Breast epithelium (tissue), 4 donors: ENCODE measurements at regions of chr18 and their contacts with region 1.

Region 1: DNA sequence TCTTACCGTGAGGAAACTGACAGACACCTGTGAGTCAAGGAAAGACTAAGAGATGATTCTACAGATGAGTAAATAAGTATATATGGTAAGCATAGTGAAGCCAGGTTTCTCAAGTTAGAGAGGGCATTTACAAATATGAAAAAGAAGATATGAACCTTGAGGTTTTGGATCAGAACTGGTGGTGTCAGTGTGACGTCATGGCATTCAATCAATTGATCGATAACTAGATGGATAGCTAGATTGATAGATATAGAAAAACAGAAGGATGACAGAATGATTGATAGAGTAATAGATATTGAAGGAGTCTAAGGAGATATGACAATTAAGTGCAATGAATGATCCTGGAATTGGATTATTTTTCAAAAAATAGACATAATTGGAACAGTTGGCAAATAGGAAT is 350.2 kb upstream of the MC4R start:
- DNase-seq: no peak
- H3K4me3 ChIP-seq: no peak overlapping the region
- H3K27ac ChIP-seq: no peak overlapping the region
- H3K4me1 ChIP-seq: no peaks in the 10 kb centered on the region
- H3K27me3 ChIP-seq: no peaks in the 10 kb centered on the region
- CTCF ChIP-seq: no peak
- POLR2A ChIP-seq: no peak

Region 2: DNA sequence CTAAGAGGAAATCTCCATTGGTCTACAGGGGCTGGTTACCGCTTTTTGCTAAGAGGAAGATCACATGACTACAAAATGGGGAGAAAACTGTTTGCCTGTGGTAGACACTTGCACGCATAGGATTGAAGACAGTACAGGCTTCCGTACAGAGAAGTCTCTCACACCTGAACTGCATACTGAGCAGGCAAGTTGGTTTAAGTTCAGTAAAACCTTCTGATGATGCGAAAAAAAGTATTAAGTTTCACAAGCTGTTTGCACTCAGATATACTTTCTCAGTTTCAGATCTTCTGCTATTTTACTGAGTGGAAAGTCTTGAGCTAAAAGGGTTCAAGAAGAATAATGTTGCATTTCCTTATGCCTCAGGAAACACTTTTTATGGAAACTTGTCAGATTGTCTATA is 58.0 kb before region 1 on chr18:
- intact Hi-C with region 1: loop called (anchors 2 kb)
- DNase-seq: no peak
- H3K4me3 ChIP-seq: no peak overlapping the region
- H3K27ac ChIP-seq: no peak overlapping the region
- H3K4me1 ChIP-seq: no peaks in the 10 kb centered on the region
- H3K27me3 ChIP-seq: no peaks in the 10 kb centered on the region
- CTCF ChIP-seq: no peak
- POLR2A ChIP-seq: no peak

Region 3: DNA sequence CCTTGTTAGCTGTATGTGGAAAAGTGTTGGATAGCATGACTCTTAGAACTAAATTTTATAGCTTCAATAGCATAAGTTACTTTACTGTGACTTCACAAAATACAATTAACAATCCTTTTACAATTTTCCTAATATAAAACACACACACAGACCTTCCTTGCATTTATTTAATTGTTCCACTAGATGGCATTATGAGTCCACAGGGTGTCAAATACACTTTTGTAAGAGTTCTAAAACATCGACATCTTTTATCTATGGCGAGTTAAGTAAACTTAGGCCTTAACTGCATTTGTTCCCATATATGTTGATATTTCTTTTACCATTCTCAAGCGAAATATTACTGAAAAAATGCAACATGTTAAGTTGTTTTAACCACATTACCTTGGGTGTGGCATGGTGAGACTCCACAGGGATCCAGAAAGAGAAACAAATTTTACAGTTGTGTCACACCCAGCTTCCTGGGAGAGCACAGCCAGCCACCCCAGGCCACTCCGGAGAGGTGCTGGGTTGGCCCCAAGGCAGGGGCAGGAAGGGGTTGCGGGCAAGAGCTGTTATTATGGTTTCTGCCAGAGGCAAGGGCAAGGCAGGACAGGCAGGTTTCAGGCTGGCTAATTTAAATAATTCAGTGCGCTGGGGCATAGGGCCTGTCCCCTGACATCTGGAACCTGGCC is 37.8 kb before region 1 on chr18:
- intact Hi-C with region 1: no loop called
- DNase-seq: no peak
- H3K4me3 ChIP-seq: no peak overlapping the region
- H3K27ac ChIP-seq: no peak overlapping the region
- H3K4me1 ChIP-seq: no peaks in the 10 kb centered on the region
- H3K27me3 ChIP-seq: peaks cover 0 to under 1% of the 10 kb centered on the region in 2 donors
- CTCF ChIP-seq: peak in 1 of 3 donors; percentile 49
- POLR2A ChIP-seq: no peak

Region 4: GRCh38 chr18:60698901-60699300 is 23.8 kb before region 1 on chr18:
- intact Hi-C with region 1: no loop called
- DNase-seq: no peak
- H3K4me3 ChIP-seq: no peak overlapping the region
- H3K27ac ChIP-seq: no peak overlapping the region
- H3K4me1 ChIP-seq: no peaks in the 10 kb centered on the region
- H3K27me3 ChIP-seq: no peaks in the 10 kb centered on the region
- CTCF ChIP-seq: no peak
- POLR2A ChIP-seq: no peak

Region 5: DNA sequence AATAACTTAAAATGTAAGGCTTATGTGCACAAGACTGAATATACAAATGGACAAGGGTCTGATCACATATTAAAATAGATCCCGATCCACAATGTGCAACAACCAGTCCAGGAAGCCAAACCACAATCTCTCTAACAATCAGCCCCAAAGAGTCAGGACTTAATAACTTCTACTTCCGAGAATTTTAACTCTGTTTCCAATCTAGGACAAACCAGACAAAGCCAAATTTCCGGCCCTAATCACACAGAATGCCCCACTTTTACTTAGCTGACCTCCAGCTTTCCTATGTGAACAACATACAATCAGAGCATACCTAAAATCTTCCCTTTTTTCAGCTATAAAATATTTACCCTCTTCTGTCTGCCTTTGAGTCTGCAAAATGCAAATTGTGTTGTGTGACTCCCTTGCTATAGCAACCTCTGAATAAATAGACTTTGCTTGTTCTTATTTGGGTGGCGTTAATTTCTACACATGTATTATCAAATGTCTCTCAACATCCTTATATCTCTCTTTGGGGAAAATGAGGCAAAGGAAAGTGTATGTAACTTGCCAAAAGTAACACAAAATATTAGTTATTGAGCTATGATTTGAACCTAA is 31.8 kb after region 1 on chr18:
- intact Hi-C with region 1: no loop called
- DNase-seq: no peak
- H3K4me3 ChIP-seq: no peak overlapping the region
- H3K27ac ChIP-seq: peak overlapping the region in 1 of 2 donors; percentile 3
- H3K4me1 ChIP-seq: no peaks in the 10 kb centered on the region
- H3K27me3 ChIP-seq: no peaks in the 10 kb centered on the region
- CTCF ChIP-seq: no peak
- POLR2A ChIP-seq: no peak

Region 6: DNA sequence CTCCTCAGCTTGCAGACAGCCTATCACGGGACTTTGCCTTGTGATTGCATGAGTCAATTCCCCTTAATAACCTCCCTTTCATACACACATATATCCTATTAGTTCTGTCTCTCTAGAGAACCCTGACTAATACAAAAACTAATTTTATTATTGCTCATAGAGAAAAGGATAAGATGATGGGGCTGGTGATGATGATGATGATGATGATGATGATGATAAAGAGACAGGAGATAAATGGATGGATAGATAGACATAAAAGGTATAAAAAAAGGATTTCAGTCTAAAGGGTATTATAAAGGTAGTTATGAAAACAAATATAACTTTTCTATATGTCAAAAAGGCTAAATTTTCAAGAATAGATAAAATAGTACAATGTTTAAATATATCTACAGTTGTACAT is 381.0 kb after region 1 on chr18:
- intact Hi-C with region 1: no loop called
- DNase-seq: no peak
- H3K4me3 ChIP-seq: no peak overlapping the region
- H3K27ac ChIP-seq: no peak overlapping the region
- H3K4me1 ChIP-seq: no peaks in the 10 kb centered on the region
- H3K27me3 ChIP-seq: no peaks in the 10 kb centered on the region
- CTCF ChIP-seq: no peak
- POLR2A ChIP-seq: no peak